ENCODE measurements at regions of chr1 and their contacts with region 1.

Region 1: GRCh38 chr1:32413507-32414185 is 19.4 kb upstream of the BSDC1 start:
- DNase-seq: peak; percentile 48 to 91 (median 66)
- ATAC-seq: peak; percentile 83
- H3K4me3 ChIP-seq: no peak overlapping the region
- H3K4me3 Mint-ChIP-seq: no peak overlapping the region
- H3K27ac ChIP-seq: no peak overlapping the region
- H3K27ac Mint-ChIP-seq: no peak overlapping the region
- H3K4me1 ChIP-seq: peaks cover 2% of the 10 kb centered on the region
- H3K4me1 Mint-ChIP-seq: no peaks in the 10 kb centered on the region
- H3K27me3 ChIP-seq: no peaks in the 10 kb centered on the region
- H3K27me3 Mint-ChIP-seq: peaks cover 20% of the 10 kb centered on the region
- CTCF ChIP-seq: peak; percentile 84

Region 2: GRCh38 chr1:31663622-31664452 is 749.8 kb before region 1 on chr1:
- CTCF ChIA-PET with region 1: no interaction called
- POLR2A ChIA-PET with region 1: no interaction called
- intact Hi-C with region 1: loop called (anchors 5 to 10 kb)
- DNase-seq: peak in 13 of 14 experiments; percentile 23 to 72 (median 54)
- ATAC-seq: peak; percentile 54
- H3K4me3 ChIP-seq: no peak overlapping the region
- H3K4me3 Mint-ChIP-seq: no peak overlapping the region
- H3K27ac ChIP-seq: no peak overlapping the region
- H3K27ac Mint-ChIP-seq: no peak overlapping the region
- H3K4me1 ChIP-seq: no peaks in the 10 kb centered on the region
- H3K4me1 Mint-ChIP-seq: no peaks in the 10 kb centered on the region
- H3K27me3 ChIP-seq: no peaks in the 10 kb centered on the region
- H3K27me3 Mint-ChIP-seq: no peaks in the 10 kb centered on the region
- CTCF ChIP-seq: peak; percentile 80

Region 3: GRCh38 chr1:32215629-32216480 is 197.8 kb before region 1 on chr1:
- CTCF ChIA-PET with region 1: interaction called, 4 read pairs
- POLR2A ChIA-PET with region 1: no interaction called
- intact Hi-C with region 1: loop called (anchors 1 kb)
- DNase-seq: peak; percentile 33 to 81 (median 50)
- ATAC-seq: peak; percentile 96
- H3K4me3 ChIP-seq: no peak overlapping the region
- H3K4me3 Mint-ChIP-seq: no peak overlapping the region
- H3K27ac ChIP-seq: no peak overlapping the region
- H3K27ac Mint-ChIP-seq: peak overlapping the region; percentile 62
- H3K4me1 ChIP-seq: peaks cover 16% of the 10 kb centered on the region
- H3K4me1 Mint-ChIP-seq: peaks cover 13% of the 10 kb centered on the region
- H3K27me3 ChIP-seq: no peaks in the 10 kb centered on the region
- H3K27me3 Mint-ChIP-seq: no peaks in the 10 kb centered on the region
- CTCF ChIP-seq: peak; percentile 85

Region 4: DNA sequence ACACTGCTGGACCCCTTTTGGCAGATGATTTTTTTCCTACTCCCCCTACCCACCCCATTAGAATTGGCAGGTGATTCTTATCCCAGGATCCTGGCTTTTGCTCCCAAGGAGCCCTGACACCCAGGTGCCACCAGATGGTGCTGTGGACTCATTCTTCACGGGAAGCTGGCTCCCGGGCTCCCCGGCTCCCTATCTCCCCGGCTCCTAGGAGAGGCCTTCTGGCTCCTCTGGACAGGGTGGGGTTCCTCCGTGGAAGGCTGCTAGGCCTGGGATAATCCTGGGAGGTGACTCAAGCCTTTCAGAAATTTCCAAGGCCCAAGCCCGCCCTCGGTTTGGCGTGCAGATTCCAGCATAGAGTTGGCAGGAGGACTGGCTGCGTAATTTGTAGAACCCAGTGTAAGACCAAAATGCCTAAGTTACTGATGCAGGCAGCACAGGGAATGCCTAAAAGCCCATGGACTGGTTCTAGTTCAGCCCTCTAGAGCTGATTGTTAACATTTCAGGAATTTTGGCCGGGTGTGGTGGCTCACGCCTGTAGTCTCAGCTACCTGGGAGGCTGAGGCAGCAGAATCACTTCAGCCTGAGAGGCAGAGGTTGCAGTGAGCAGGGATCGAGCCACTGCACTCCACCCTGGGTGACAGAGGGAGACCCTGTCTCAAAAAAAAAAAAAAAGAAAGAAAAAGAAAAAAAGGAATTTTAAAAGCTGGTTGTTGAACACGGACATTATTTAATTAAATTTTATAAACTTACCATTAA is 12.6 kb before region 1 on chr1:
- CTCF ChIA-PET with region 1: interaction called, 28 read pairs
- POLR2A ChIA-PET with region 1: interaction called, 3 read pairs
- intact Hi-C with region 1: loop called (anchors 1 to 2 kb)
- DNase-seq: peak; percentile 8 to 71 (median 37)
- ATAC-seq: peak; percentile 52
- H3K4me3 ChIP-seq: no peak overlapping the region
- H3K4me3 Mint-ChIP-seq: no peak overlapping the region
- H3K27ac ChIP-seq: no peak overlapping the region
- H3K27ac Mint-ChIP-seq: no peak overlapping the region
- H3K4me1 ChIP-seq: peaks cover 7% of the 10 kb centered on the region
- H3K4me1 Mint-ChIP-seq: no peaks in the 10 kb centered on the region
- H3K27me3 ChIP-seq: no peaks in the 10 kb centered on the region
- H3K27me3 Mint-ChIP-seq: no peaks in the 10 kb centered on the region
- CTCF ChIP-seq: peak; percentile 86

Region 5: DNA sequence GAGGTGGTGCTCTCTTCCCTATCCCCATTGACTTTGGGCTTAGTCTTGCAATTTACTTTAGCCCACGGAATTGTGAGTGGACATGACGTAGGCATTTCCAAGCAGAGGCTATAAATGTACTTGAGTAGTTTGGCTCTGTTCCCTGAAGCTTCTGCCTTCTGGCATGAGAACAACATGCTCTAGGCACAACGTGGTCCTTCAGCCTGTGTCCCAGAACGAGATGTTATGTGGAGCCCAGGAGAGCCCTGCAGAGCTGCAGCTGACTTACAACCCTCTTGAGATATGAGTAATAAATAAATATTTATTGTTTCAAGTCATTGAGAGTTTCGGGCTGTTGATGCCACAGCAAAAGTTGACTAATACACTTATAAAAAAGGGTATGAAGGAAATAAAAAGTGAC is 1345.1 kb after region 1 on chr1:
- CTCF ChIA-PET with region 1: no interaction called
- POLR2A ChIA-PET with region 1: no interaction called
- intact Hi-C with region 1: no loop called
- DNase-seq: no peak
- ATAC-seq: no peak
- H3K4me3 ChIP-seq: no peak overlapping the region
- H3K4me3 Mint-ChIP-seq: no peak overlapping the region
- H3K27ac ChIP-seq: no peak overlapping the region
- H3K27ac Mint-ChIP-seq: no peak overlapping the region
- H3K4me1 ChIP-seq: no peaks in the 10 kb centered on the region
- H3K4me1 Mint-ChIP-seq: no peaks in the 10 kb centered on the region
- H3K27me3 ChIP-seq: no peaks in the 10 kb centered on the region
- H3K27me3 Mint-ChIP-seq: peaks cover 4% of the 10 kb centered on the region
- CTCF ChIP-seq: no peak

Measured in CD4-positive, alpha-beta T cell (primary cell).